CD4-positive, alpha-beta memory T cell (primary cell): ENCODE measurements at regions of chr19 and their contacts with region 1.

Region 1: DNA sequence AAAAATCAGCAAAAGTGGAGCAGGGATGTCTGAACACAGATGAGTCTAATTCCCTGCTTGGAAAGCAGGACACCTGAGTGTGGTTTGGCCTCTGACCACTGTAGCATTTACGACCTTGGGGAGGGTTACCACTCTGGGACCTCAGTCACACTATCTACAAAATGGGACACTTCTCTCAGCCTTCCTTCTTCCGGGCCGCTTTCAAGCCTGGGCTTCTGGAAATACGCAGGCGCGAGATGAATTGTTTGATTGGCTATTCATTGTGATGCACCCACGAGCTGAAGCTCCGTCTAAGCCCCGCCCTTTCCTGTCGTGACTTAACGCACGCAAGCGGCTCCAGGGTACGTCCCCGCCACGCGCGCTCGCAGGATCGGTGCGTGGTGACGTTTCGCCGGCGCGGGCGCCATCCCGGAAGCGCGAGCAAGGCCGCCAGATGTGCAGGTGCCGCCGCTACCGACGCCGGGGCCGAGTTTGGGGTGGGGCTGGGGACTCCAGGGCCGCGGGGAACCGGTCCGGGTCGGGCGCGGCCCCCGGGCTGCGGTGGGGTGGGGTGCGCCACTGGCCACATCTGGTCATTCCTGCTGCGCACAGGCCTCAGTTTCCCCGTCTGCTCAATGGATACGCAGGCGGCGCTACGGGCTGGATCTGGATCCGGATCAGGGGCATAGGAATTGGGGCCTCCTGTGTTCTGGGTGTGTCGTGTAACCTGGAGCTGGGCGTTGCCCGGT is at the start of gene KXD1:
- DNase-seq: peak; percentile 95 to 100 (median 99)
- H3K4me3 ChIP-seq: peak within 1 kb of the TSS; percentile 81 to 97
- H3K4me3 Mint-ChIP-seq: peak within 1 kb of the TSS; percentile 86 to 97 (median 93)
- H3K27ac ChIP-seq: peak within 1 kb of the TSS; percentile 98
- H3K27ac Mint-ChIP-seq: peak within 1 kb of the TSS; percentile 94 to 98 (median 96)
- H3K4me1 ChIP-seq: peaks cover 25% of the 10 kb centered on the region
- H3K4me1 Mint-ChIP-seq: peaks cover 9 to 35% (median 17%) of the 10 kb centered on the region in 4 donors
- H3K27me3 ChIP-seq: no peaks in the 10 kb centered on the region
- H3K27me3 Mint-ChIP-seq: no peaks in the 10 kb centered on the region
- total RNA-seq, gene KXD1: 95.3 to 95.6 TPM

Region 2: DNA sequence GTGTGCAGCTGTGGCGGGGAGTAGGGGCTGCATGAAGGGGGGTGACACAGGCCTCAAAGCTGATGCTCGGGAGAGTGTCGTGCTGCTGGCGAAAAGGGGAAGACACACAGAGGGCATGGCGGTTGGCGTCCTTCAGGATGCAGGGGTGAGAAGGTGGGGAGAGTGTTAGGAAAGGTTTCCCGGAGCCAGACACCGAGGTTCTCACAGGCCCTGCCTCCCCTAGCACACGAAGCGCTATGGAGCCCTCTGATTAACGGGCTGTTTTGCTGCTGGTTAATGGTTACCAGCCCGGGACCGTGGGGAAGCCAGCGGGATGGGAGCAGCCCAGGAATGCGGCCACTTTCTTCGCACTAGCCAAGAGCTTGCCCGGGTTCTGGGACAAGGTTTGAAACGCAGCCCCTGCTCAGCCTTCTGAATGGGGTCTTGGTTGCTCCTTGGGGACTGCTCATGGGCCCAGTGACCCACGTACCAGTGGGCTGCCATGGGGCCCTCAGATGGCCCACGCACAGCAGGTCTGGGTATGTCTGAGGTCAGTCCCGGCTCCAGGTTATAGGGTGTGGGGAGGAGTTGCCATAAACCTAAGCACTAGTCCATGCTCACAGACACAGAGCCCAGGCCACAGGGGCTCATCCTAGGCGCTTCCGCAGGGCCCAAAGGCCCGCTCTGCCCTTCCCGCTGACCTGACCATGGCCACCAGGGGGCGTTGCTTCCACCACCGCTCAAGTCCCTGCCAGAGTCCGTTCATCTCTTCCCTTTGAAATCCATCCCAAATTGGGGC is 88.4 kb before region 1 on chr19:
- CTCF ChIA-PET with region 1: interaction called, 3 read pairs
- POLR2A ChIA-PET with region 1: interaction called, 13 read pairs
- intact Hi-C with region 1: no loop called
- DNase-seq: peak; percentile 45 to 59 (median 56)
- H3K4me3 ChIP-seq: no peak overlapping the region
- H3K4me3 Mint-ChIP-seq: peak overlapping the region in 1 of 8 donors; percentile 25
- H3K27ac ChIP-seq: no peak overlapping the region
- H3K27ac Mint-ChIP-seq: peak overlapping the region in 6 of 7 donors; percentile 42 to 84 (median 80)
- H3K4me1 ChIP-seq: peaks cover 47% of the 10 kb centered on the region
- H3K4me1 Mint-ChIP-seq: peaks cover 15 to 52% (median 32%) of the 10 kb centered on the region in 4 donors
- H3K27me3 ChIP-seq: no peaks in the 10 kb centered on the region
- H3K27me3 Mint-ChIP-seq: no peaks in the 10 kb centered on the region

Region 3: GRCh38 chr19:18538115-18538514 is 19.5 kb before region 1 on chr19:
- CTCF ChIA-PET with region 1: no interaction called
- POLR2A ChIA-PET with region 1: interaction called, 17 read pairs
- intact Hi-C with region 1: no loop called
- DNase-seq: no peak
- H3K4me3 ChIP-seq: no peak overlapping the region
- H3K4me3 Mint-ChIP-seq: peak overlapping the region in 1 of 8 donors; percentile 11
- H3K27ac ChIP-seq: no peak overlapping the region
- H3K27ac Mint-ChIP-seq: peak overlapping the region in 1 of 7 donors; percentile 42
- H3K4me1 ChIP-seq: peaks cover 14% of the 10 kb centered on the region
- H3K4me1 Mint-ChIP-seq: peaks cover 4 to 22% (median 12%) of the 10 kb centered on the region in 4 donors
- H3K27me3 ChIP-seq: no peaks in the 10 kb centered on the region
- H3K27me3 Mint-ChIP-seq: no peaks in the 10 kb centered on the region

Region 4: GRCh38 chr19:18542936-18543815 is 14.5 kb before region 1 on chr19 and contains the start of gene FKBP8:
- CTCF ChIA-PET with region 1: interaction called, 25 read pairs
- POLR2A ChIA-PET with region 1: interaction called, 81 read pairs
- intact Hi-C with region 1: loop called (anchors 1 kb)
- DNase-seq: peak; percentile 89 to 94 (median 91)
- H3K4me3 ChIP-seq: peak within 1 kb of the TSS; percentile 52 to 59
- H3K4me3 Mint-ChIP-seq: peak within 1 kb of the TSS; percentile 91 to 100 (median 96)
- H3K27ac ChIP-seq: peak within 1 kb of the TSS; percentile 78
- H3K27ac Mint-ChIP-seq: peak within 1 kb of the TSS; percentile 97 to 99 (median 98)
- H3K4me1 ChIP-seq: peaks cover 25% of the 10 kb centered on the region
- H3K4me1 Mint-ChIP-seq: peaks cover 8 to 35% (median 21%) of the 10 kb centered on the region in 4 donors
- H3K27me3 ChIP-seq: no peaks in the 10 kb centered on the region
- H3K27me3 Mint-ChIP-seq: no peaks in the 10 kb centered on the region
- total RNA-seq, gene FKBP8: 231 to 249 TPM

Region 5: DNA sequence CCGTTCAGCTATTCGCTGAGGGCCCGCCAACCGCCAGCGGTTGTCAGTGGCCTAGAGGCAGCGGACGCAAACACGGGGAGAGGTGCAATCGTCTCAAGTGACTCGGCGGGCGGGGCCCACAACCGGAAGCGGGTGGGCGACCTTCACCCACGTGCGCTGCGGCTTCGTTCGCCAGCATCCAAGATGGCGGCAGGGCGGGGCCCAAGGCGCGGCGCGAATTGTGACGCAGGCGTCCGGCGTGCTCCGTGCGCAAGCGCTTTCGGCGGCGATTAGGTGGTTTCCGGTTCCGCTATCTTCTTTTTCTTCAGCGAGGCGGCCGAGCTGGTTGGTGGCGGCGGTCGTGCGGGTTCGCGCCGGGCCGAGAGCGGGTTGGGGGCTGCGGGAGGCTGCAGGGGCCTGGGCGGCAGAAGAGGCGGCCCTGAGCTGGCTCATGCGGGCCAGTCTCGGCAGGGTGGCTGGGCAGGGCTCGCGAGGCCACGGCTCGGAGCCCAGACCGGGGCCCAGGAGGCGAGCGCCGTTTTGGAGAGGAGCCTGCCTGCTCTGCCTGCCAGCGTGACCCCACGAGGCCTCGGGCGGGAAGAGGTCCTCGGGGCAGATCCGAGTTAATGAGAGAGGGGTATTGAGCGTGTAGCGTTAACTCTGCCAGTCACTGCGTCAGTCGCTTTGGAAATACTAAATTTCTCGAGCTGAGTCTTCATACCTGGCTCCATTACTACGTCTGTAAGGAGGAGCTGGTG is 14.1 kb after region 1 on chr19 and contains the start of gene UBA52:
- CTCF ChIA-PET with region 1: interaction called, 6 read pairs
- POLR2A ChIA-PET with region 1: interaction called, 97 read pairs
- intact Hi-C with region 1: loop called (anchors 1 kb)
- DNase-seq: peak; percentile 98 to 99 (median 99)
- H3K4me3 ChIP-seq: peak within 1 kb of the TSS; percentile 69 to 92
- H3K4me3 Mint-ChIP-seq: peak within 1 kb of the TSS; percentile 89 to 97 (median 94)
- H3K27ac ChIP-seq: peak within 1 kb of the TSS; percentile 97
- H3K27ac Mint-ChIP-seq: peak within 1 kb of the TSS; percentile 97 to 99 (median 98)
- H3K4me1 ChIP-seq: peaks cover 26% of the 10 kb centered on the region
- H3K4me1 Mint-ChIP-seq: peaks cover 12 to 36% (median 22%) of the 10 kb centered on the region in 4 donors
- H3K27me3 ChIP-seq: no peaks in the 10 kb centered on the region
- H3K27me3 Mint-ChIP-seq: no peaks in the 10 kb centered on the region
- total RNA-seq, gene UBA52: 1,962 to 1,978 TPM

Region 6: DNA sequence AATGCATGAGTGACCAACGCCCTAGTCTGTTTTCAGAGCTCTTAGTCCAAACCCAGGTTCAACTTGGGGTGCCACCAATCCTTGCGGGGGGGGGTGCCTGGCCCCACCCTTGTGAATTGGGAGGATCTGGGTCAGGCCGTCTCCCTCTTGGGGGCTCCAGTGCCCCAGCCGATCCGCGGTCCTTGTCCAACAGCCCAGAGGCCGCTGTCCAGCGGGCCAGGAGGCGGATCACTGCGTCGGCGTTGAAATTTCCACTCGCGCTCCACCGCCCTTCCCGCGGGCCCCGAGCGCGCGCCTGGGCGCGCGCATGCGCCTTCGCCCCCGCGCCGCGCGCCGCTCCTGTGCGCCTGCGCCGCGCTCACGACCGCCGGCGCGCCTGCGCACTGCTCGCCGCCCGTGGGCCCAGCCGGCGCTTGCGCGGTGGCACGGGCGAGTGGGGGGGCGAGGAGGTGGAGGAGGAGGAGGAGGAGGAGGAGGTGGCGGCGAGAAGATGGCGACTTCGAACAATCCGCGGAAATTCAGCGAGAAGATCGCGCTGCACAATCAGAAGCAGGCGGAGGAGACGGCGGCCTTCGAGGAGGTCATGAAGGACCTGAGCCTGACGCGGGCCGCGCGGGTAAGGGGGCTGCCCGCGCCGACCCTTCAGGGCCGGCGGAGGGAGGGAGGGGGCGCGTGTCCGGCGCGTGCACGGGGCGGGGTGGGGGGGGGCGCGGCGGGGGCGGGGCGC is 125.7 kb after region 1 on chr19 and contains the start of gene CRTC1:
- CTCF ChIA-PET with region 1: no interaction called
- POLR2A ChIA-PET with region 1: interaction called, 3 read pairs
- intact Hi-C with region 1: loop called (anchors 1 kb)
- DNase-seq: peak; percentile 93 to 97 (median 95)
- H3K4me3 ChIP-seq: peak within 1 kb of the TSS; percentile 70 to 86
- H3K4me3 Mint-ChIP-seq: peak within 1 kb of the TSS; percentile 86 to 92 (median 88)
- H3K27ac ChIP-seq: peak within 1 kb of the TSS; percentile 70
- H3K27ac Mint-ChIP-seq: peak within 1 kb of the TSS; percentile 82 to 95 (median 93)
- H3K4me1 ChIP-seq: peaks cover 20% of the 10 kb centered on the region
- H3K4me1 Mint-ChIP-seq: peaks cover 11 to 41% (median 21%) of the 10 kb centered on the region in 4 donors
- H3K27me3 ChIP-seq: no peaks in the 10 kb centered on the region
- H3K27me3 Mint-ChIP-seq: no peaks in the 10 kb centered on the region
- total RNA-seq, gene CRTC1: 19.6 to 20.8 TPM

Region 7: GRCh38 chr19:18756896-18757295 is 199.3 kb after region 1 on chr19:
- CTCF ChIA-PET with region 1: no interaction called
- POLR2A ChIA-PET with region 1: no interaction called
- intact Hi-C with region 1: no loop called
- DNase-seq: no peak
- H3K4me3 ChIP-seq: no peak overlapping the region
- H3K4me3 Mint-ChIP-seq: no peak overlapping the region
- H3K27ac ChIP-seq: no peak overlapping the region
- H3K27ac Mint-ChIP-seq: no peak overlapping the region
- H3K4me1 ChIP-seq: no peaks in the 10 kb centered on the region
- H3K4me1 Mint-ChIP-seq: no peaks in the 10 kb centered on the region
- H3K27me3 ChIP-seq: no peaks in the 10 kb centered on the region
- H3K27me3 Mint-ChIP-seq: no peaks in the 10 kb centered on the region

Region 8: DNA sequence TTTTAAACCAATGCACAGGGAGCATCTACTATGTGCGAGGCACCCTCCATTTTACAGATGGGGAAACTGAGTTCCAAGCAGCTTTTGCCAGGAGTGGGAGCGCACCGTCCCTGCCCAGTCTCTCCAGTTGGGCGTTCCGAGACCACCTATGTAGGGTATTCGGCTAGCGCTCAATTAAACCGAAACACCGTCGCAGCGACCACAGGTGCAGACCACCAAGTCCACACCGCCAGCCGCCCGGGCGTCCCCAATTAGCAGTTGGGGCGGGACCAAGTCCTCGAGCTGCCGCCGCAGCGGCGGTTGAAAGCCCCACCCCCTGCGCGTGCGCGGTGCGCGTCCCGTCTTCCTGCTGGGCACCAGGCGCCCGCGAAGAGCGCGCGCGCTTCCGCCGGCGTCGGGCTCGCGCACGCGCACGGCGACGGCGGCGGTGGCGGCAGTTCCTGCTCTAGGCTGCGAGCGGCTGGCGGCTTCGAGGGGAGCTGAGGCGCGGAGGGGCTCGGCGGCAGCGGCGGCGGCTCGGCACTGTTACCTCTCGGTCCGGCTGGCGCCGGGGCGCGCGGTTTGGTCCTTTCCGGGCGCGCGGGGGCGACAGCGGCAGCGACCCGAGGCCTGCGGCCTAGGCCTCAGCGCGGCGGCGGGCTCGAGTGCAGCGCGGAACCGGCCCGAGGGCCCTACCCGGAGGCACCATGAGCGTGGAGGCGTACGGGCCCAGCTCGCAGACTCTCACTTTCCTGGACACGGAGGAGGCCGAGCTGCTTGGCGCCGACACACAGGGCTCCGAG is 274.1 kb after region 1 on chr19 and contains the start of gene UPF1:
- CTCF ChIA-PET with region 1: no interaction called
- POLR2A ChIA-PET with region 1: interaction called, 10 read pairs
- intact Hi-C with region 1: no loop called
- DNase-seq: peak; percentile 94 to 97 (median 95)
- H3K4me3 ChIP-seq: peak within 1 kb of the TSS; percentile 64 to 85
- H3K4me3 Mint-ChIP-seq: peak within 1 kb of the TSS; percentile 90 to 99 (median 95)
- H3K27ac ChIP-seq: peak within 1 kb of the TSS; percentile 75
- H3K27ac Mint-ChIP-seq: peak within 1 kb of the TSS; percentile 89 to 96 (median 93)
- H3K4me1 ChIP-seq: peaks cover 36% of the 10 kb centered on the region
- H3K4me1 Mint-ChIP-seq: peaks cover 29 to 47% (median 36%) of the 10 kb centered on the region in 4 donors
- H3K27me3 ChIP-seq: no peaks in the 10 kb centered on the region
- H3K27me3 Mint-ChIP-seq: peaks cover 2 to 5% of the 10 kb centered on the region in 2 donors
- total RNA-seq, gene UPF1: 127 to 130 TPM